ENCODE measurements at regions of chr1 and their contacts with region 1.

Region 1: GRCh38 chr1:248837794-248838356 is at the start of gene ZNF672:
- DNase-seq: peak; percentile 99
- H3K4me3 Mint-ChIP-seq: no peak within 1 kb of the TSS
- H3K27ac Mint-ChIP-seq: no peak within 1 kb of the TSS
- H3K4me1 Mint-ChIP-seq: no peaks in the 10 kb centered on the region
- H3K27me3 Mint-ChIP-seq: no peaks in the 10 kb centered on the region
- CTCF ChIP-seq: no peak
- total RNA-seq, gene ZNF672: 28.3 and 28.7 TPM in 2 replicates

Region 2: GRCh38 chr1:248288391-248288790 is 549.5 kb before region 1 on chr1:
- CTCF ChIA-PET with region 1: no interaction called
- intact Hi-C with region 1: no loop called
- DNase-seq: no peak
- H3K4me3 Mint-ChIP-seq: no peak overlapping the region
- H3K27ac Mint-ChIP-seq: no peak overlapping the region
- H3K4me1 Mint-ChIP-seq: no peaks in the 10 kb centered on the region
- H3K27me3 Mint-ChIP-seq: no peaks in the 10 kb centered on the region
- CTCF ChIP-seq: no peak

Region 3: GRCh38 chr1:248825909-248826760 is 11.7 kb before region 1 on chr1 and contains the start of gene SH3BP5L:
- CTCF ChIA-PET with region 1: interaction called, 21 read pairs
- intact Hi-C with region 1: no loop called
- DNase-seq: peak; percentile 91
- H3K4me3 Mint-ChIP-seq: peak within 1 kb of the TSS; percentile 84
- H3K27ac Mint-ChIP-seq: peak within 1 kb of the TSS; percentile 93
- H3K4me1 Mint-ChIP-seq: peaks cover 36% of the 10 kb centered on the region
- H3K27me3 Mint-ChIP-seq: no peaks in the 10 kb centered on the region
- CTCF ChIP-seq: peak; percentile 77
- total RNA-seq, gene SH3BP5L: 25.3 and 27.1 TPM in 2 replicates

Region 4: GRCh38 chr1:248858891-248859889 is 21.3 kb after region 1 on chr1 and contains the start of gene ZNF692:
- CTCF ChIA-PET with region 1: interaction called, 21 read pairs
- intact Hi-C with region 1: no loop called
- DNase-seq: peak; percentile 97
- H3K4me3 Mint-ChIP-seq: peak within 1 kb of the TSS; percentile 90
- H3K27ac Mint-ChIP-seq: peak within 1 kb of the TSS; percentile 88
- H3K4me1 Mint-ChIP-seq: peaks cover 25% of the 10 kb centered on the region
- H3K27me3 Mint-ChIP-seq: peaks cover 16% of the 10 kb centered on the region
- CTCF ChIP-seq: no peak
- total RNA-seq, gene ZNF692: 61.4 and 61.5 TPM in 2 replicates

Measured in Calu3 (cell line).